ENCODE measurements at regions of chr4 and their contacts with region 1.

Region 1: DNA sequence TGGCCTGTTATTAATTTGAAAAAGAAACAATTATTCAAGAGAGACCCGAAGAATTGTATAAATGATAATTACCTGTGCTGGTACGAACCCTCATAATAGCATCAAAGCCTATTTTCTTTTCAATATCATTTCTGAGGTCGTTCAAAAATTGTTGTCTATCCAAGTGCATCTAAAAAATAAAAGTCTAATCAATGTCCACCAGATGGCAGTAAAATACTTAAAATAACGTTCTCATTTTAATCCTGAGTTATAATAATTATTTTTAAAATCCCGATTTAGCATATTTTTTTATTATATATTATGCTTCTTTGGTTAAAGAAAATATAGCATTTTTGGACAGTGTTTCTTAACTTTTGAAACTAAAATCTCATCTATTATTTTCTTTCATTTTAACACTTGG is 55.7 kb downstream of the METTL14 start:
- DNase-seq: no peak
- H3K4me3 ChIP-seq: no peak overlapping the region
- H3K4me3 Mint-ChIP-seq: no peak overlapping the region
- H3K27ac Mint-ChIP-seq: no peak overlapping the region
- H3K4me1 ChIP-seq: no peaks in the 10 kb centered on the region
- H3K4me1 Mint-ChIP-seq: no peaks in the 10 kb centered on the region
- H3K27me3 ChIP-seq: no peaks in the 10 kb centered on the region
- H3K27me3 Mint-ChIP-seq: no peaks in the 10 kb centered on the region
- CTCF ChIP-seq: peak in 1 of 2 experiments; percentile 34

Region 2: GRCh38 chr4:118968005-118968404 is 227.1 kb after region 1 on chr4:
- CTCF ChIA-PET with region 1: no interaction called
- POLR2A ChIA-PET with region 1: no interaction called
- intact Hi-C with region 1: loop called (anchors 1 kb)
- DNase-seq: no peak
- H3K4me3 ChIP-seq: no peak overlapping the region
- H3K4me3 Mint-ChIP-seq: no peak overlapping the region
- H3K27ac Mint-ChIP-seq: no peak overlapping the region
- H3K4me1 ChIP-seq: peaks cover 10% of the 10 kb centered on the region; the same call in 1 of the 2 replicates
- H3K4me1 Mint-ChIP-seq: peaks cover 8% of the 10 kb centered on the region
- H3K27me3 ChIP-seq: no peaks in the 10 kb centered on the region
- H3K27me3 Mint-ChIP-seq: no peaks in the 10 kb centered on the region
- CTCF ChIP-seq: no peak

Region 3: GRCh38 chr4:119041951-119042560 is 301.2 kb after region 1 on chr4:
- CTCF ChIA-PET with region 1: no interaction called
- POLR2A ChIA-PET with region 1: no interaction called
- intact Hi-C with region 1: no loop called
- DNase-seq: peak; percentile 72 to 78
- H3K4me3 ChIP-seq: no peak overlapping the region
- H3K4me3 Mint-ChIP-seq: no peak overlapping the region
- H3K27ac Mint-ChIP-seq: no peak overlapping the region
- H3K4me1 ChIP-seq: peaks cover 10% of the 10 kb centered on the region
- H3K4me1 Mint-ChIP-seq: peaks cover 20% of the 10 kb centered on the region
- H3K27me3 ChIP-seq: no peaks in the 10 kb centered on the region
- H3K27me3 Mint-ChIP-seq: no peaks in the 10 kb centered on the region
- CTCF ChIP-seq: peak; percentile 62 to 77

Measured in Caco-2 (cell line).